MCF 10A (cell line): ENCODE measurements at regions of chr12 and their contacts with region 1.

Region 1: DNA sequence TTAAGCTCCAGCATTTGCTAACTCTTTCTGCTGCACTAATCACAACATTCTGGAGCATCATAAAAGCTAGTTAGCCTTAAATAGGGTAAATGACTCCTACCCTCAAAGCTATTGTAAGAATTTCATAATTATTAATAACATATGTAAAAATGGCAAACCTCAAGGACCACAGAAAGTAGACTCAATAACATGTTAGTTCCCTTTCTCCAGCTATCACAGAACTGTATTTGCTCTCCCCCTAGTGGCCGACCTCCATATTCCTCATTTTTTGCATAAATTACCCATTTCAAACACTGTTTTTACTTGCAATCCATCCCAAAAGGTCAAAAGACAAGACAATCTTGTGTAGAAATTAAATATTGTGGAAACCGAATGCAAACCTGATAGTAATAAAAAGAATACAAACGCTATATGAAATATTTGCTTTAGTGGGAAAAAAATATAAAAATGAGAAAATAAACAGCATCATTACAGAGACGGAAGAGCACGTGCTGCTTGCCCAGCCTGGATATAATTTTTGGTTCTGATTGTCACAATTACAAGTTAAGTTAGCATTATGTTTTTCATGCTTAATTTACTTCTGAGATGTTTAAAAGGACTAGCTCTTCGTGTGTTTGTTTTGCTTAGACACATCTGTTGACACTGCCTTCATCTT is 97.9 kb downstream of the RERGL start:
- DNase-seq: peak; percentile 56
- H3K4me3 Mint-ChIP-seq: no peak overlapping the region
- H3K27ac Mint-ChIP-seq: no peak overlapping the region
- H3K4me1 Mint-ChIP-seq: no peaks in the 10 kb centered on the region
- H3K27me3 Mint-ChIP-seq: peaks cover 55% of the 10 kb centered on the region
- CTCF ChIP-seq: peak; percentile 61

Region 2: GRCh38 chr12:17169726-17170471 is 822.2 kb before region 1 on chr12:
- CTCF ChIA-PET with region 1: no interaction called
- POLR2A ChIA-PET with region 1: no interaction called
- intact Hi-C with region 1: loop called (anchors 10 kb)
- DNase-seq: no peak
- H3K4me3 Mint-ChIP-seq: no peak overlapping the region
- H3K27ac Mint-ChIP-seq: no peak overlapping the region
- H3K4me1 Mint-ChIP-seq: peaks cover 5% of the 10 kb centered on the region
- H3K27me3 Mint-ChIP-seq: peaks cover 22% of the 10 kb centered on the region
- CTCF ChIP-seq: no peak